CD4-positive, alpha-beta memory T cell (primary cell): ENCODE measurements at regions of chr4 and their contacts with region 1.

Region 1: DNA sequence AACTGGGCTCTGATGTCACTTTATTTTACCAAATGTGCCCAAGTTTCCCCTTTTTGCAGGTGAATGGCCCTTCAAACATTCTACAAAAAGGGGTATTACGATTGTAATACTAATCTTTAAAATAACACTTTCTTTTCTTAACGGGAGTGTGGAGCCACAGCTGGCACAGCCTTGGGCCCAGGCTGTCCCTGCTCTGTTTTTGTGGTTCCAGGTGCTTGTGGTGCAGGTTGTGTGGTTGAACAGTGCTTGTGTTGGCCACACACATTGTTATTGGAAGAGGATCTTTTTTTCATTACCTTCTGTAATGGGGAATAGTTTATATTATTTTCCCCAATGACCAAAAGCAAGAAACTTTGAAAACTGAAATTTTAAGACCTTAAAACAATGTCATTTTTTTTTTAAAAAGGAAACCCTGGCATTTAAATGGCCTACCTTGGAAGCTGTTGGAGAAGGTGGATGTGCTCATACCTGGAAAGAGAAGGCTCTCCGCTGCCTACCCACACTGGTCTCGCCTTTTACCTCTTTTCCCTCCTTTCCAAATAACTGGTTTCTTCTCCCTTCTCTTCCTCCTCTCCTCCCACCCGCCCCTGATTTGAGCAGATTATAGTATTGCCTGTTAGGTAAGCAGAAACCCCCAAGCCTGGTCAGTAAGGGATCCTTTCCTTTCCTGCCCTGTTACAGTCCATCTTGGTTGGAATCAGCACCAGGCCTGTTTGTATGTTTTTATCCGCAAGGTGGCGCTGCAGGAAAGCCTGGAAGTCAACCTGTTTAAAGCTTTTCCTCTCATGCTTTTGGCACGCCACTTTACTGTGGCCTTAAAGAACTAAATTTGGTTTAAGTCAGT is 28.6 kb downstream of the HADH start:
- DNase-seq: peak; percentile 72 to 77 (median 74)
- H3K4me3 ChIP-seq: no peak overlapping the region
- H3K4me3 Mint-ChIP-seq: no peak overlapping the region
- H3K27ac ChIP-seq: no peak overlapping the region
- H3K27ac Mint-ChIP-seq: peak overlapping the region in 2 of 7 donors; percentile 15 to 65
- H3K4me1 ChIP-seq: no peaks in the 10 kb centered on the region
- H3K4me1 Mint-ChIP-seq: peaks cover 1 to 12% (median 3%) of the 10 kb centered on the region in 4 donors
- H3K27me3 ChIP-seq: no peaks in the 10 kb centered on the region
- H3K27me3 Mint-ChIP-seq: no peaks in the 10 kb centered on the region

Region 2: GRCh38 chr4:107966903-107967302 is 51.4 kb before region 1 on chr4:
- CTCF ChIA-PET with region 1: no interaction called
- POLR2A ChIA-PET with region 1: no interaction called
- intact Hi-C with region 1: no loop called
- DNase-seq: no peak
- H3K4me3 ChIP-seq: no peak overlapping the region
- H3K4me3 Mint-ChIP-seq: no peak overlapping the region
- H3K27ac ChIP-seq: no peak overlapping the region
- H3K27ac Mint-ChIP-seq: no peak overlapping the region
- H3K4me1 ChIP-seq: no peaks in the 10 kb centered on the region
- H3K4me1 Mint-ChIP-seq: no peaks in the 10 kb centered on the region
- H3K27me3 ChIP-seq: no peaks in the 10 kb centered on the region
- H3K27me3 Mint-ChIP-seq: peaks cover 0 to 1% of the 10 kb centered on the region in 2 donors

Region 3: DNA sequence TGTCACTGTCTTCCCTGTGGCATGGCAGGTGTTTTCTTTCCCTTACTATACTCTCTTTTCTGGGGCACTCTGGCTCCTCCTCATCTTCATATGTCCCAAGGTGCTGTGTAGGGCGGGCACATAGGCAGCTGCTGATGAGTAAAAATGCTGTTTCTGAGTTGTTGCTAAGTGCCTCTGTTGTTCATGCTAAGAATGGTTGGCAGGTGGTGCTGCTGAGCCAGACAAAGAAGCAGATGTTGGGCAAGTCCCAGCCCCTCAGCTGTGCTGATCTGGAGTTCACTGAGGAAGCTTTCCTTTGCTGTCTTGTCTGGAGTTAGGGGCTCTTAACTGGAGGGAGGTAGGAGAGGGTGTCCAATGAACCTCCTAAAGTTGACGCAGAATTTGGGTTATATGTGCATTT is 12.1 kb after region 1 on chr4:
- CTCF ChIA-PET with region 1: interaction called, 35 read pairs
- POLR2A ChIA-PET with region 1: no interaction called
- intact Hi-C with region 1: no loop called
- DNase-seq: peak; percentile 62 to 75 (median 70)
- H3K4me3 ChIP-seq: no peak overlapping the region
- H3K4me3 Mint-ChIP-seq: peak overlapping the region in 5 of 8 donors; percentile 50 to 76 (median 56)
- H3K27ac ChIP-seq: no peak overlapping the region
- H3K27ac Mint-ChIP-seq: peak overlapping the region; percentile 31 to 94 (median 84)
- H3K4me1 ChIP-seq: peaks cover 25% of the 10 kb centered on the region
- H3K4me1 Mint-ChIP-seq: peaks cover 21 to 40% (median 25%) of the 10 kb centered on the region in 4 donors
- H3K27me3 ChIP-seq: no peaks in the 10 kb centered on the region
- H3K27me3 Mint-ChIP-seq: no peaks in the 10 kb centered on the region

Region 4: GRCh38 chr4:108473221-108473620 is 455.0 kb after region 1 on chr4:
- CTCF ChIA-PET with region 1: interaction called, 3 read pairs
- POLR2A ChIA-PET with region 1: no interaction called
- intact Hi-C with region 1: loop called (anchors 5 kb)
- DNase-seq: peak in 1 of 5 donors; percentile 8
- H3K4me3 ChIP-seq: no peak overlapping the region
- H3K4me3 Mint-ChIP-seq: no peak overlapping the region
- H3K27ac ChIP-seq: no peak overlapping the region
- H3K27ac Mint-ChIP-seq: peak overlapping the region in 1 of 7 donors; percentile 5
- H3K4me1 ChIP-seq: peaks cover 2% of the 10 kb centered on the region
- H3K4me1 Mint-ChIP-seq: peaks cover under 1 to 6% (median 4%) of the 10 kb centered on the region in 4 donors
- H3K27me3 ChIP-seq: no peaks in the 10 kb centered on the region
- H3K27me3 Mint-ChIP-seq: no peaks in the 10 kb centered on the region

Region 5: DNA sequence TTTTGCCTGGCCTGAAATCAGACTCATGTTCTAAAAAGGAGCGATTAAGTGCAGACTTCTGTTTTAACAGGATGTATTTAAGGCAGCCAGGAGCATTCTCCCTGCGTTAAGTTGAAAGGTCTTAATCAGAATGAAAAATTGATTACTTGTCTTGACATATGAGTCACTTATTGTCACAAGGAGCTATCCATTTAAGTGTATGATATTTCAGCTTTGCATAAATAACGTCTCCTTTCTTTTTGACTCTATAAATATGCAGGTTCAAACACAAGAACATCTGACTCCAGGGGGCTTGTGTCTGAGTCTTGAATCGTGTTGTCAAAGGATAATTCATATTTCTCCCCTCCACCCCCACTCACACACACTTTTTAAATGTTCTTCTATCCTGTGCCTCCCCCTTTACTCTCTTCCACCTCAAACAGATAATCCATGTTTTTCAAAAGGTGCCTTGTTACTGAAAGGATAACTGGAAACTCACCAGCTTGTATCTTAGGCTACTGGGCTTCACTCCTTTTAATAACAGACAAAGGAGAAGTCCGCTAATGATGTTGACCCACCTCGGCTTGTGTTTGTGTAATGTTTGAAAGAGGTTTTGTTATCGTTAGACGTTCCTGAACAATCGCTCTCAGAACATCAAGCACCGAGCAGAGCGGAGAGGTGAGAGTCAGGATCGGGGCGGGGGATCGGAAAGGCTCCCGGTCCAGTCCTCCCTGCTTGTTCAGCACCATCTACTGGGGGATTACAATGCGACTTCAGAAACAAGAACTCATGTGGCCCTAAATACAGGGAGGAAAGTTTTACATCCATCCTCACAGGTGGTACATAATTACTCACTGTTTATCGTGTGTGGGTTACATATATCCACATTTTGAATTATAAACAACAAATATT is 494.6 kb after region 1 on chr4:
- CTCF ChIA-PET with region 1: interaction called, 9 read pairs
- POLR2A ChIA-PET with region 1: no interaction called
- intact Hi-C with region 1: loop called (anchors 1 kb)
- DNase-seq: peak in 4 of 5 donors; percentile 10 to 38 (median 24)
- H3K4me3 ChIP-seq: no peak overlapping the region
- H3K4me3 Mint-ChIP-seq: peak overlapping the region in 7 of 8 donors; percentile 1 to 82 (median 71)
- H3K27ac ChIP-seq: no peak overlapping the region
- H3K27ac Mint-ChIP-seq: peak overlapping the region in 1 of 7 donors; percentile 5
- H3K4me1 ChIP-seq: no peaks in the 10 kb centered on the region
- H3K4me1 Mint-ChIP-seq: peaks cover 7 to 16% (median 9%) of the 10 kb centered on the region in 4 donors
- H3K27me3 ChIP-seq: no peaks in the 10 kb centered on the region
- H3K27me3 Mint-ChIP-seq: peaks cover 0 to 4% of the 10 kb centered on the region in 2 donors

Region 6: GRCh38 chr4:108783665-108784463 is 765.6 kb after region 1 on chr4:
- CTCF ChIA-PET with region 1: no interaction called
- POLR2A ChIA-PET with region 1: no interaction called
- intact Hi-C with region 1: loop called (anchors 5 kb)
- DNase-seq: no peak
- H3K4me3 ChIP-seq: no peak overlapping the region
- H3K4me3 Mint-ChIP-seq: no peak overlapping the region
- H3K27ac ChIP-seq: no peak overlapping the region
- H3K27ac Mint-ChIP-seq: no peak overlapping the region
- H3K4me1 ChIP-seq: no peaks in the 10 kb centered on the region
- H3K4me1 Mint-ChIP-seq: no peaks in the 10 kb centered on the region
- H3K27me3 ChIP-seq: no peaks in the 10 kb centered on the region
- H3K27me3 Mint-ChIP-seq: peaks cover 5 to 9% of the 10 kb centered on the region in 2 donors